HEK293T (cell line): ENCODE measurements at regions of chr9 and their contacts with region 1.

Region 1: GRCh38 chr9:15552636-15553527 is at the start of gene CCDC171:
- DNase-seq: peak; percentile 89

Region 2: DNA sequence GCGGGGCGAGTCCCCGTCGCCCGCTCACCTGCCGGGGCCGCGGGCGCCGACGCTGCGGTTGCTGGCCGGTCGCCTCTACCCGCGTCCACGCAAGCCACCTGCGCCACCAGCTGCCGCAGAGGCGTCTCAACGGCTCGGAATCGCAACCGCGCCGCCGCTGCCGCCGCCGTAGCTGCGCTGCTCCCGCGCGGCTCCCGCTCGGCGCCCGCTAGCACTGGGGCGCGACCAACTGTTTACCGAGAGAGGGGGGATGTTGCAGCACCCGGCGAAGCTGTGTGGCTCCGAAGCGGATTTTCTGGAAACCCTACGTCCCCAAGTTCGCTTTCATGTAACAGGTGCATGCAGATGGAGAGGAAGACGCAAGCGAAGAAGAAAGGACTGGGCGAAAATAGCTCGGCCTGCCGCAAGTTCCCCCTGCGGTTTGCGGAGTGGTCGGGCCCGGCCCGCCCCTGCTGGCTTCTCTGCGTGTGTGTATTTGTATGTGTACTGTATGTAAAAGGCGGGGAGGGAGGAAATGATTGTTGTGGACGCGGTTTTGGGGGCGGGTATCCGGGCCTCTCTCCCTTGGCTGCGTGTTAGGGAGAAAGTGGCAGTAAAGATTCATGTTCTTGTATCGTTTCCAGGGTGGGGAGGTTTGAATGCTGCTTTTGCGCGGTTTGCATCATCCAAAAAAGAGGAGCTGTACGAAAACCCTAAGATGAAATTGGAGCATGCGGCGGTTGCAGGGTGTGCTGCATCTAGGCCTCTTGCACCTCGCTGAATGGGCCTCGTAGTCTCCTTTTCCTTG is 41.9 kb before region 1 on chr9 and contains the start of gene PSIP1:
- CTCF ChIA-PET with region 1: no interaction called
- POLR2A ChIA-PET with region 1: interaction called, 43 read pairs
- DNase-seq: peak; percentile 67

Region 3: DNA sequence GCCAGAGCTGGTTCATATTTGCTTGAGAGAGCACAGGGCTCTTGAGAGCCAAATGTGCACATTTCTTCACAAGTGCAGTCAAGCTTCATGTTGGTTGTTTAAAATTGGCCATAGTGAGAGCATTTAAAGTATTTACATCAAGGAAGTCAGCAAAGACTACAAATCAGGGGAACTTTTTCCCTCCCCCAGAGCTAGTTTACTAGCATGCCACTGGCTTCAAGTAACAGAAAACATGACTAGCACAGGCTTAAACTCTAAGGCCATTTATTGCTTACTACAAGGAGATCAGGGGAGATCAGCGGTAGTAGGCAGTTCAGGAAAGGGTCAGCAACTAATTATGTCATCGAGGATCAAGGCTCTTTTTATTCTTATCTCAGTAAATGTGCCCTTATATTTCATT is 11.0 kb before region 1 on chr9:
- CTCF ChIA-PET with region 1: no interaction called
- POLR2A ChIA-PET with region 1: interaction called, 18 read pairs
- DNase-seq: no peak

Region 4: GRCh38 chr9:15606643-15607472 is 54.0 kb after region 1 on chr9:
- CTCF ChIA-PET with region 1: interaction called, 9 read pairs
- POLR2A ChIA-PET with region 1: interaction called, 12 read pairs
- DNase-seq: peak; percentile 5